Naive thymus-derived CD8-positive, alpha-beta T cell (primary cell): ENCODE measurements at regions of chr17 and their contacts with region 1.

Region 1: GRCh38 chr17:4143563-4144421 is 795 bp downstream of the CYB5D2 start:
- DNase-seq: peak; percentile 85 to 96 (median 91)
- ATAC-seq: peak; percentile 75 to 76
- H3K4me3 Mint-ChIP-seq: peak overlapping the region; percentile 98 to 100 (median 99)
- H3K27ac Mint-ChIP-seq: peak overlapping the region; percentile 99 to 100 (median 100)
- H3K4me1 Mint-ChIP-seq: peaks cover 19 to 50% (median 43%) of the 10 kb centered on the region in 4 donors
- H3K27me3 Mint-ChIP-seq: no peaks in the 10 kb centered on the region

Region 2: DNA sequence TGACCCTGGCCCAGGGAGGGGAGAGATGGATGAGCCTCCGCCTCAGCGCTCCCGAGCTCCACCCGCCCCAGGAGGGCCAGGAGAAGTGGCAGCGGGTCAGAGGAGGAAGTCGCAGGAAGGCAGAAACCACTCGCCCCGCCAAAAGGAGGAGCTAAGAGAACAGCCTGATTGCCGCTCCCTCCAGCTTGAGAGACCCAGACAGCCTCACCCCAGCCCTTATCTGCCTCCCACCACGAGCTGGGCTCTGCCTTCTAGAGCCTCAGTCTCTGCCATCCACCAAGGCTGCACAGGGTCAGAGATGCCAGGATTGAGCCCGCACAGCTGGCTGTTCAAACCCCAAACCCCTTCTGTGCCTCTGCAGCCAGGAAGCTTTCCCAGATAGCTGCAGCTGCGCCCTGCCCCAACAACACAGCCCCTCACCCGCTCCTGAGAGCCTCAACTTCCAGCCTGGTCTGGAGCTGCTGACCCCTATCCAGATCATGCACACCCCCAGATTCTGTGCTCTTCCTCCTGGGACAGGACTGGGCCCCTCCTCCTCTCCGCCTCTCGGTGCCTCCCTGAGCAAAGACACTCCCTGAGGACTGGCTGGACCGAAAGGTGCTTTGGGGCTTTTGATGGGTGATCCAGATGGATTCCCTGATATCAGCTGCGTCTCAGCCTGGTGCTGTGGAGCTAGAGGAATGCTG is 178.5 kb before region 1 on chr17:
- POLR2A ChIA-PET with region 1: interaction called, 16 read pairs
- DNase-seq: peak; percentile 42 to 80 (median 62)
- ATAC-seq: peak; percentile 56 to 65
- H3K4me3 Mint-ChIP-seq: peak overlapping the region; percentile 82 to 96 (median 93)
- H3K27ac Mint-ChIP-seq: peak overlapping the region; percentile 79 to 98 (median 95)
- H3K4me1 Mint-ChIP-seq: peaks cover 28 to 60% (median 46%) of the 10 kb centered on the region in 4 donors
- H3K27me3 Mint-ChIP-seq: no peaks in the 10 kb centered on the region

Region 3: GRCh38 chr17:4050971-4051370 is 92.8 kb before region 1 on chr17:
- POLR2A ChIA-PET with region 1: no interaction called
- DNase-seq: no peak
- ATAC-seq: no peak
- H3K4me3 Mint-ChIP-seq: no peak overlapping the region
- H3K27ac Mint-ChIP-seq: no peak overlapping the region
- H3K4me1 Mint-ChIP-seq: peaks cover 5 to 14% (median 9%) of the 10 kb centered on the region in 4 donors
- H3K27me3 Mint-ChIP-seq: no peaks in the 10 kb centered on the region

Region 4: GRCh38 chr17:4161179-4161559 is 17.4 kb after region 1 on chr17:
- POLR2A ChIA-PET with region 1: interaction called, 43 read pairs
- DNase-seq: no peak
- ATAC-seq: no peak
- H3K4me3 Mint-ChIP-seq: no peak overlapping the region
- H3K27ac Mint-ChIP-seq: peak overlapping the region in 5 of 10 donors; percentile 11 to 80 (median 51)
- H3K4me1 Mint-ChIP-seq: peaks cover 0 to 12% (median 6%) of the 10 kb centered on the region in 4 donors
- H3K27me3 Mint-ChIP-seq: no peaks in the 10 kb centered on the region

Region 5: DNA sequence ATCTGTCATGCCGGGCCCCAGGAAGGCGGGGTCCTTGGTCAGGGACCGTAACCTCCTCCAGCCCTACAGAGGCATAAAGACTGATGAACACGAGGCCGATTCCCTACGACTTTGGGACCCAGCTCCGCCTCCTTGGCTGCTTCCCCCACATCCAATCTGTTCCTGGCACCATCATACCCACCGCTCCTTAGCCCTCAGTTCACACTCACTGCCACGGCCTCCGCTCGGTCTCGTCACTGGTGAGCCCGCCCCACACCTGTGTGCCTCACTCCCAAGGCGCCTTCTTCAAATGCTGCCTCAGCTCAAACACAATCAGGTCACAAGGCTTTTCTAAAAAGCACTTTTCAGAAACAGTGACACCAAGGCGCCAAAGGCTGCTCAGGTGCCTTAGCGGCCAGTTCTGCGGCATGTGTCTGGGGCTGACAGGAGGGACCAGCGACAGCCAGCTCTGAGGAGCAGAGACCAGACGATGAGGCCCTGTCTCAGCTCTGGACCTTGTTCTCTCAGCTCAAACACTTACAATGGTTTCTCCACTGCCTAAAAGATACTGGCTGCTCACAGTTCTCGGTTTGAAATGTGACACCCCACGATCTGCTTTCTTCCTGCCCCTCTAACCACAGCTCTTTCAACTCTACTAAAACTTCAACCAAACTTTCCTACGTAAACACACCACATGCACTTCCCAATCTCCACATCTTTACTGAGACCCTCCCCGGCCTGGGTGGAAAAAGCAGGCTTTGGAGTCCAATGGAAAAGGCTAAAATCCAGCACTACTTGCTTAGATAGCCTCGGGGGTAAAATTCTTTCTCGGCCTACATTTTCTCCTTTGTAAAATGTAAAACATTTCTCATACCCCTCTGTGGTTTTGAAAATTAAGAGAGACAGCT is 32.4 kb after region 1 on chr17:
- POLR2A ChIA-PET with region 1: interaction called, 117 read pairs
- DNase-seq: peak in 9 of 10 donors; percentile 17 to 74 (median 47)
- ATAC-seq: peak; percentile 85 to 88
- H3K4me3 Mint-ChIP-seq: peak overlapping the region; percentile 67 to 96 (median 85)
- H3K27ac Mint-ChIP-seq: peak overlapping the region; percentile 89 to 99 (median 97)
- H3K4me1 Mint-ChIP-seq: peaks cover 30 to 69% (median 54%) of the 10 kb centered on the region in 4 donors
- H3K27me3 Mint-ChIP-seq: no peaks in the 10 kb centered on the region

Region 6: DNA sequence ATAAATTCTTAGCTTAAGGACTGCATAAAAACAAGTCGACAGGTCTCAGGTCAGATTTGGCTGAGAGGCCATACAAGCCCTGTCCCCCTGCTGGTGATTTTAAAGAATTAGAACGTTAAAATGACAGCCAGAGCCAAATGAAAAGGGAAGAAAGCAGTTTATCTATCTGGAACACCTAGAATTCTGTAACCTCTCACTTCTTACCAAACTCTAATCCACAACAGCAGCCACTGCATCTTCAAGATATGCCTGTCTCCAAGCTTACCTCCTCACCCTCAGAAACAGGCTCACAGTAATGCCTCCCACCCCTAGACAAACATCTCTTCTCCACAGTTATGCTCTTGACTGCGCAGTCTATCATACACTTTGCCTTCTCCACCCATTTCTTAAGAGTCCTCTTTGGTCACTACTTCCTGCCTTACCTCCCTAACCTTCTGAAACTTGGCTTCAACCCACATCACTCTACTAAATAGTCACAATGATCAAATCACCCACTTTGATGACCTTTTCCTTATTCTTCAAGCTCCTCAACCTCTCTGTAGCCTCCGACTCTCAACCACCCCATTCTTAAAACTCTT is 105.7 kb after region 1 on chr17:
- POLR2A ChIA-PET with region 1: no interaction called
- DNase-seq: peak in 3 of 10 donors; percentile 8 to 21 (median 11)
- ATAC-seq: no peak
- H3K4me3 Mint-ChIP-seq: peak overlapping the region in 2 of 10 donors; percentile 21 to 33
- H3K27ac Mint-ChIP-seq: peak overlapping the region in 7 of 10 donors; percentile 0 to 71 (median 21)
- H3K4me1 Mint-ChIP-seq: peaks cover 36 to 62% (median 53%) of the 10 kb centered on the region in 4 donors
- H3K27me3 Mint-ChIP-seq: no peaks in the 10 kb centered on the region

Region 7: GRCh38 chr17:4939796-4940624 is 796.2 kb after region 1 on chr17 and contains the starts of genes RNF167 and SLC25A11:
- POLR2A ChIA-PET with region 1: interaction called, 10 read pairs
- DNase-seq: peak; percentile 90 to 99 (median 96)
- ATAC-seq: peak; percentile 85 to 88
- H3K4me3 Mint-ChIP-seq: peak within 1 kb of the TSS; percentile 91 to 100 (median 96)
- H3K27ac Mint-ChIP-seq: peak within 1 kb of the TSS; percentile 93 to 99 (median 98)
- H3K4me1 Mint-ChIP-seq: peaks cover 44 to 82% (median 72%) of the 10 kb centered on the region in 4 donors
- H3K27me3 Mint-ChIP-seq: no peaks in the 10 kb centered on the region
- polyA plus RNA-seq, gene RNF167: 30.3 to 50.0 (median 32.2) TPM
- polyA plus RNA-seq, gene SLC25A11: 75.3 to 78.6 (median 77.6) TPM